ENCODE measurements at regions of chr5 and their contacts with region 1.

Region 1: GRCh38 chr5:79133657-79134451 is 22.2 kb downstream of the BHMT start:
- DNase-seq: peak; percentile 24
- ATAC-seq: peak; percentile 89
- H3K4me3 ChIP-seq: no peak overlapping the region
- H3K27ac ChIP-seq: no peak overlapping the region
- H3K4me1 ChIP-seq: peaks cover 17% of the 10 kb centered on the region
- H3K27me3 ChIP-seq: no peaks in the 10 kb centered on the region
- CTCF ChIP-seq: peak; percentile 70 to 83 (median 74)
- EP300 ChIP-seq: no peak
- POLR2A ChIP-seq: no peak
- RAD21 ChIP-seq: peak; percentile 93

Region 2: GRCh38 chr5:78886341-78887230 is 247.3 kb before region 1 on chr5:
- CTCF ChIA-PET with region 1: interaction called, 21 read pairs
- POLR2A ChIA-PET with region 1: no interaction called
- RAD21 ChIA-PET with region 1: no interaction called
- SMC1A ChIA-PET with region 1: interaction called, 3 read pairs
- in situ Hi-C with region 1: no loop called
- intact Hi-C with region 1: no loop called
- DNase-seq: no peak
- ATAC-seq: peak; percentile 25
- H3K4me3 ChIP-seq: no peak overlapping the region
- H3K27ac ChIP-seq: no peak overlapping the region
- H3K4me1 ChIP-seq: peaks cover 21% of the 10 kb centered on the region
- H3K27me3 ChIP-seq: no peaks in the 10 kb centered on the region; a peak in 1 of 4 replicates
- CTCF ChIP-seq: peak; percentile 37 to 52 (median 38); a peak in 5 of 6 replicates
- EP300 ChIP-seq: no peak
- POLR2A ChIP-seq: no peak
- RAD21 ChIP-seq: peak; percentile 51

Region 3: GRCh38 chr5:78984439-78985115 is 149.3 kb before region 1 on chr5:
- CTCF ChIA-PET with region 1: interaction called, 43 read pairs
- POLR2A ChIA-PET with region 1: no interaction called
- RAD21 ChIA-PET with region 1: interaction called, 21 read pairs
- SMC1A ChIA-PET with region 1: interaction called, 22 read pairs
- in situ Hi-C with region 1: no loop called
- intact Hi-C with region 1: no loop called
- DNase-seq: no peak
- ATAC-seq: peak; percentile 54
- H3K4me3 ChIP-seq: peak overlapping the region; percentile 94
- H3K27ac ChIP-seq: peak overlapping the region; percentile 90
- H3K4me1 ChIP-seq: peaks cover 15% of the 10 kb centered on the region; the same call in 1 of the 2 replicates
- H3K27me3 ChIP-seq: no peaks in the 10 kb centered on the region
- CTCF ChIP-seq: 0 out of 6 replicates have a peak, but pooled peaks of 2 of the 3 experiments have one; percentile 13 to 23
- EP300 ChIP-seq: 0 out of 4 replicates have a peak, but pooled peaks of 1 of the 2 experiments have one; percentile 32
- POLR2A ChIP-seq: peak; percentile 89
- RAD21 ChIP-seq: no peak

Region 4: GRCh38 chr5:79048437-79048836 is 85.4 kb before region 1 on chr5:
- CTCF ChIA-PET with region 1: interaction called, 12 read pairs
- POLR2A ChIA-PET with region 1: no interaction called
- RAD21 ChIA-PET with region 1: interaction called, 3 read pairs
- SMC1A ChIA-PET with region 1: no interaction called
- in situ Hi-C with region 1: no loop called
- intact Hi-C with region 1: no loop called
- DNase-seq: no peak
- ATAC-seq: no peak
- H3K4me3 ChIP-seq: no peak overlapping the region
- H3K27ac ChIP-seq: no peak overlapping the region
- H3K4me1 ChIP-seq: no peaks in the 10 kb centered on the region
- H3K27me3 ChIP-seq: no peaks in the 10 kb centered on the region; a peak in 2 of 4 replicates
- CTCF ChIP-seq: no peak
- EP300 ChIP-seq: no peak
- POLR2A ChIP-seq: no peak
- RAD21 ChIP-seq: no peak

Region 5: GRCh38 chr5:79157305-79157704 is 23.5 kb after region 1 on chr5:
- CTCF ChIA-PET with region 1: interaction called, 12 read pairs
- POLR2A ChIA-PET with region 1: no interaction called
- RAD21 ChIA-PET with region 1: no interaction called
- SMC1A ChIA-PET with region 1: interaction called, 4 read pairs
- in situ Hi-C with region 1: no loop called
- intact Hi-C with region 1: no loop called
- DNase-seq: no peak
- ATAC-seq: no peak
- H3K4me3 ChIP-seq: no peak overlapping the region
- H3K27ac ChIP-seq: no peak overlapping the region
- H3K4me1 ChIP-seq: no peaks in the 10 kb centered on the region
- H3K27me3 ChIP-seq: no peaks in the 10 kb centered on the region
- CTCF ChIP-seq: no peak
- EP300 ChIP-seq: no peak
- POLR2A ChIP-seq: no peak
- RAD21 ChIP-seq: no peak

Region 6: DNA sequence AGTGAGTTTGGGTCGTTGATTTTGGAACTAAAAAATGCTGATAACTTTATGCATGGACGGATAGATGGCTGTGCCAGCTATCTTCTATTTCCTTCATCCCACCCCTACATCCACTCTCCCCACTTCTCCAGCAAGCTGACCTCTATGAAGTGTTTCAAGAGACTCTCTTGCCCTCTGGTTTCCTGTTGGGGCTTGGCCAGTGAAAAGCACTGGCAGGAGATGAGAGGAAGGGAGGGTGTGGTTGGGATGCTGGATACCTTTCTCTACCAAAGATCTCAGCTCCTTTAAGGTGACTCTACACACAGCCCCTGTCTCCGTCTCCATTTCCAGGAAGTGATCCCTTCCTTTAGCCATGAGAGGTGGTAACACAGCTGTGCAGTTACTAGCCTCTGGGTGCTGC is 72.1 kb after region 1 on chr5:
- CTCF ChIA-PET with region 1: interaction called, 18 read pairs
- POLR2A ChIA-PET with region 1: no interaction called
- RAD21 ChIA-PET with region 1: interaction called, 9 read pairs
- SMC1A ChIA-PET with region 1: interaction called, 5 read pairs
- in situ Hi-C with region 1: no loop called
- intact Hi-C with region 1: no loop called
- DNase-seq: no peak
- ATAC-seq: no peak
- H3K4me3 ChIP-seq: no peak overlapping the region
- H3K27ac ChIP-seq: no peak overlapping the region
- H3K4me1 ChIP-seq: no peaks in the 10 kb centered on the region
- H3K27me3 ChIP-seq: no peaks in the 10 kb centered on the region
- CTCF ChIP-seq: no peak
- EP300 ChIP-seq: no peak
- POLR2A ChIP-seq: no peak
- RAD21 ChIP-seq: no peak

Region 7: DNA sequence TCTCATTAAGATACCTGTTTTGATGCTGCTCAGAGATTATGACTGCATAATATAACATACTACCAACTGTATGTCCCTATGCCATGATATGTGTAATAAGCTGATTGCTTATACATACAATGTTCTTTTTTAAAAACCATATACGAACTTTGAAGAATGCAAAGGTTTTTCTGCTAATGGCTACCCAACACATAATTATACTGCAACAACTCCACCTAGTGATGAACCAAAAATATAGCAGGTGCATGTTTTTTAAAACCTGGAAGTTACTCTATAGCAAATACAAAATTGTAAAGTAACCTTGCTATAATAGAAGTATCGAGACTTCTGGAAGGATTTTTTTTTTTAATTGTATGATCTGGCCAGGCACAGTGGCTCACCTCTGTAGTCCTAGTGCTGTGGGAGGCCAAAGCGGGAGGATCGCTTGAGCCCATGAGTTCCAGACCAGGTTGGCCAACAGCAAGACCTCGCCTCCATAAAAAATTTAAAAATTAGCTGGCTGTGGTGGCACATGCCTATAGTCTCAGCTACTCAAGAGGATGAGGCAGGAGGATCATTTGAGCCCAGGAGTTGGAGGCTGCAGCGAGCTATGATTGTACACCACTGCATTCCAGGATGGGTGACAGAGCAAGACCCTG is 331.0 kb after region 1 on chr5:
- CTCF ChIA-PET with region 1: interaction called, 322 read pairs
- POLR2A ChIA-PET with region 1: interaction called, 3 read pairs
- RAD21 ChIA-PET with region 1: interaction called, 135 read pairs
- SMC1A ChIA-PET with region 1: interaction called, 163 read pairs
- in situ Hi-C with region 1: loop called (anchors 5 kb)
- intact Hi-C with region 1: loop called (anchors 1 kb)
- DNase-seq: no peak
- ATAC-seq: peak; percentile 75
- H3K4me3 ChIP-seq: no peak overlapping the region
- H3K27ac ChIP-seq: no peak overlapping the region
- H3K4me1 ChIP-seq: no peaks in the 10 kb centered on the region
- H3K27me3 ChIP-seq: no peaks in the 10 kb centered on the region
- CTCF ChIP-seq: peak; percentile 52 to 72 (median 62); a peak in 5 of 6 replicates
- EP300 ChIP-seq: no peak
- POLR2A ChIP-seq: no peak
- RAD21 ChIP-seq: peak; percentile 87

Measured in GM12878 (cell line).